A549 (cell line): ENCODE measurements at regions of chr2 and their contacts with region 1.

Region 1: DNA sequence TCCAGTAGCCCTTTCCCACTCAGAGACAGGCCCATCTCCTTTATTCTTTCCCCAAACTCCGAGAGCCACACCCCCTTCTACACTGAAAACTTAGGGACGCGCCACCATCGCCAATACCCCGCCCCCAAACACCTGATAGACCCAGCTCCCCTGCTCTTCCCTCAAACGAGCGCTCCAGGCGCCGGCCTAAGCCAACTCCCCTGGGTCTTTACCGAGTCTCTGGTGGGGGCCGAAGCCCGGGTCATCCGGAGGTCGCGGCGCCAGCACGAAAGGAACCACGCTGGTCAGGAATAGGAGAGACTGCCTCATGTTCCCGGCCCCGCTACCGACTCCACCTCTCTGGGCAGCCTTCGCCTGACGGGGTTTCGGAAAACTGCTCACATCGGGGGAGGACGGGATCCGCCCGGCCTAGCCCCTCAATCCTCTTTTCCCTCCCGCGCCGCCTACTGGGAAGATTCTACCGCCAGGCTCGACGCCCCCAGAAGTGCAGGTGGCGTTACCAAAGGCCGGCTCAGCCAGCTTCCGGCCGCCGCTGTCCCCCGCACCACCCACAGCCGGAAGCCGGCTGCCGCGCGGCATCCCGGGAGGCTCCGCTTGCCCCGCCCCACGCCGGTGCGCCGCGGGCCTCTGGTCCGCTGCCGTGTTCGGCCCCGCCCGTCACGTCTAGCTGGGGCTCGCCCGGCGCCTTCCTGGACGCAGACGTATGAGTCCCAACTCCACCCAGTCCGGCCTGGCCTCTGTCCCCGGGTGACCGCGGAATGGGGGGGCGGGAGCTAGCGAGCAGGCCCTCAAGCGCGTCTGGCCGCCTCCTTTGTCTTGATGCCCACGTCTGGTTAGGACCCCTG is at the start of gene ADAM17:
- DNase-seq: peak; percentile 84 to 98
- ATAC-seq: peak; percentile 90 to 92
- H3K4me3 ChIP-seq: peak within 1 kb of the TSS; percentile 78
- H3K27ac ChIP-seq: peak within 1 kb of the TSS; percentile 95 to 98
- H3K4me1 ChIP-seq: peaks cover 56% of the 10 kb centered on the region
- CTCF ChIP-seq: peak; percentile 58
- EP300 ChIP-seq: no peak
- POLR2A ChIP-seq: peak; percentile 87
- RAD21 ChIP-seq: peak; percentile 47 to 57; a peak in 4 of 5 replicates
- polyA plus RNA-seq, gene ADAM17: 33.0 and 33.1 TPM in 2 replicates

Region 2: DNA sequence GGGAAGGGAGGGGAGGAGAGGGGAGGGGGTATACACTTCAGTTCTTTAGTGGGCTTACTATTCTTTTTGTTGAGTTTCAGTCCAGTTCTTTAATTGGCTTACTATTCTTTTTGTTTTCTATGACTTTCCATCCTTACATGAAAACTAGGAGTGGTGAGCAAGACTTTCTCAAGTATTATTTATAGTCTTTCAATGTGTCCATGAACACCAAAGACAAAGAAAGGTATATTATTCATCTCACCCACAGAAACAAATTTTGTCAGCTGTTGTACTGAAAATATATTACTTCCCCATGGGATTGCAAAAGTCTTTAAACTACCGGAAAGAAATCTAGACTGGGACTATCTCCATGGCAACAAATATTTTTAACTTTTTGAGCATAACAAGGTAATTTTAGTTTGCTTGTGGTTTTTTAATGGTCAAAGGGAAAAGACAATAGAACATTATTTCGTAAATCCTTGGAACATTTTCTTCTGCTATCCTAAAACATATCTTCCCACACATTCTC is 17.5 kb before region 1 on chr2:
- CTCF ChIA-PET with region 1: interaction called, 9 read pairs
- POLR2A ChIA-PET with region 1: interaction called, 14 read pairs
- DNase-seq: peak; percentile 43 to 47
- ATAC-seq: peak; percentile 30 to 39; a peak in 2 of 6 replicates
- H3K4me3 ChIP-seq: no peak overlapping the region
- H3K27ac ChIP-seq: peak overlapping the region in 1 of 2 experiments; percentile 47; a peak in 3 of 6 replicates
- H3K4me1 ChIP-seq: peaks cover 53% of the 10 kb centered on the region
- CTCF ChIP-seq: no peak
- EP300 ChIP-seq: no peak
- POLR2A ChIP-seq: no peak
- RAD21 ChIP-seq: no peak

Region 3: DNA sequence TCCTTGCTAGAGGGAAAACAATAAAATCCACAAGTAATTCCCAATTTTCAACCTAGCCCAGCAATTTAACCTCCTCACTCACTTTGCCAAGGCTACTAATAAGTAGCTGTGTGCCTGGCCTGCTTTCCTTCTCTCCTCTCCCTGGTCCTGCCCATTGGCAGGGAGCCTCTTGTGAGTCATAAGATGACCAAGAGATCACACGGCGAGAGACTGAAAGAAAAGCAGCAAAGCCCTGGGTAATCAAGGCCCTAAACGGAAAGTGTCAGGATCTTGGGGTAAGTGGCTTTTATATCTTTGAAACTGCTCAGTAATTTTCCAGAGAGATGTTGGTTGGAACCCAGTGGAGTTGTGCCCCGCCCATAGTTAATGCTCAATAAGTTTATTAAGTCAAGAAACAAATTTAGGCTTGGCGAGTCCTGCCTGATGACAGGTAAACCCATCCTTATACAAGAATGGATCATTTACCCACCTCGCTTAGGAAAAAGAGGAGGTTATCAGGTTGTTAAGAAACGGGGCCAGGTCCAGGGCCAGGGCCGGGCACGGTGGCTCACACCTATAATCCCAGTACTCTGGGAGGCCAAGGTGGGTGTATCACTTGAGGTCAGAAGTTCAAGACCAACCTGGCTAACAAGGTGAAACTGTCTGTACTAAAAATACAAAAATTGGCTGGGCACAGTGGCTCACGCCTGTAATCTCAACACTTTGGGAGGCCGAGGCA is 10.1 kb after region 1 on chr2:
- CTCF ChIA-PET with region 1: interaction called, 47 read pairs
- POLR2A ChIA-PET with region 1: interaction called, 26 read pairs
- DNase-seq: peak; percentile 80 to 85
- ATAC-seq: peak; percentile 95 to 99
- H3K4me3 ChIP-seq: peak overlapping the region; percentile 19; the same call in 2 of the 3 replicates
- H3K27ac ChIP-seq: peak overlapping the region; percentile 79 to 89
- H3K4me1 ChIP-seq: peaks cover 22% of the 10 kb centered on the region
- CTCF ChIP-seq: no peak
- EP300 ChIP-seq: no peak
- POLR2A ChIP-seq: no peak
- RAD21 ChIP-seq: 0 out of 5 replicates have a peak, but pooled peaks of 1 of the 2 experiments have one; percentile 22

Region 4: GRCh38 chr2:9594366-9595054 is 39.0 kb after region 1 on chr2:
- CTCF ChIA-PET with region 1: interaction called, 4 read pairs
- POLR2A ChIA-PET with region 1: interaction called, 12 read pairs
- DNase-seq: peak; percentile 48 to 56
- ATAC-seq: peak; percentile 88 to 95
- H3K4me3 ChIP-seq: no peak overlapping the region
- H3K27ac ChIP-seq: peak overlapping the region; percentile 5 to 65; a peak in 5 of 6 replicates
- H3K4me1 ChIP-seq: peaks cover 55% of the 10 kb centered on the region
- CTCF ChIP-seq: no peak
- EP300 ChIP-seq: no peak
- POLR2A ChIP-seq: no peak
- RAD21 ChIP-seq: no peak

Region 5: GRCh38 chr2:9703085-9703641 is 147.6 kb after region 1 on chr2:
- CTCF ChIA-PET with region 1: interaction called, 4 read pairs
- POLR2A ChIA-PET with region 1: interaction called, 17 read pairs
- DNase-seq: peak; percentile 90 to 97
- ATAC-seq: peak; percentile 87 to 88
- H3K4me3 ChIP-seq: peak overlapping the region; percentile 17; the same call in 1 of the 3 replicates
- H3K27ac ChIP-seq: peak overlapping the region; percentile 91 to 95
- H3K4me1 ChIP-seq: peaks cover 48% of the 10 kb centered on the region
- CTCF ChIP-seq: peak; percentile 17; the same call in 1 of the 3 replicates
- EP300 ChIP-seq: peak in 1 of 2 experiments; percentile 4; a peak in 1 of 5 replicates
- POLR2A ChIP-seq: no peak
- RAD21 ChIP-seq: peak; percentile 47 to 51; a peak in 4 of 5 replicates

Region 6: DNA sequence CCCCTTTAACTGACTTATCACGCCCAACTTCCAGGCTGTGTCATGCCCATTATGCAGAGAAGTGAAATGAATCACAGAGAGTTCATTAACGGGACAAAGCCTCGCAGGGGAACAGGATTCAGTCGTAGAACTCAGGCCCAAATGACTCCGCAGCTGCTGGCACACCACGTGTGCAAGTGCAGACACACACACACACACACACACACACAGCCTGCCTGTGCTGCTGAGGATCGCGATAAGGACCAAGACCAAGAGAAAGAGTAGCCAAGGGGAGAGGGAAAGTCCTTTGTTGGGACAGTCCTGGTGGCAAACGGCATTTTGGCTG is 197.7 kb after region 1 on chr2:
- CTCF ChIA-PET with region 1: no interaction called
- POLR2A ChIA-PET with region 1: interaction called, 10 read pairs
- DNase-seq: peak; percentile 88 to 92
- ATAC-seq: peak; percentile 81 to 91
- H3K4me3 ChIP-seq: peak overlapping the region; percentile 35
- H3K27ac ChIP-seq: peak overlapping the region; percentile 87 to 93
- H3K4me1 ChIP-seq: peaks cover 48% of the 10 kb centered on the region
- CTCF ChIP-seq: no peak
- EP300 ChIP-seq: no peak
- POLR2A ChIP-seq: peak; percentile 30; the same call in 1 of the 2 replicates
- RAD21 ChIP-seq: no peak; a peak in 1 of 5 replicates

Region 7: GRCh38 chr2:9843229-9844035 is 287.9 kb after region 1 on chr2 and contains the start of gene TAF1B:
- CTCF ChIA-PET with region 1: no interaction called
- POLR2A ChIA-PET with region 1: interaction called, 14 read pairs
- DNase-seq: peak; percentile 95 to 96
- ATAC-seq: peak; percentile 96 to 97
- H3K4me3 ChIP-seq: peak within 1 kb of the TSS; percentile 73
- H3K27ac ChIP-seq: peak within 1 kb of the TSS; percentile 95
- H3K4me1 ChIP-seq: peaks cover 18% of the 10 kb centered on the region; the same call in 2 of the 3 replicates
- CTCF ChIP-seq: no peak
- EP300 ChIP-seq: no peak
- POLR2A ChIP-seq: peak; percentile 76
- RAD21 ChIP-seq: no peak
- polyA plus RNA-seq, gene TAF1B: 40.8 and 51.7 TPM in 2 replicates